ENCODE measurements at regions of chr12 and their contacts with region 1.

Region 1: DNA sequence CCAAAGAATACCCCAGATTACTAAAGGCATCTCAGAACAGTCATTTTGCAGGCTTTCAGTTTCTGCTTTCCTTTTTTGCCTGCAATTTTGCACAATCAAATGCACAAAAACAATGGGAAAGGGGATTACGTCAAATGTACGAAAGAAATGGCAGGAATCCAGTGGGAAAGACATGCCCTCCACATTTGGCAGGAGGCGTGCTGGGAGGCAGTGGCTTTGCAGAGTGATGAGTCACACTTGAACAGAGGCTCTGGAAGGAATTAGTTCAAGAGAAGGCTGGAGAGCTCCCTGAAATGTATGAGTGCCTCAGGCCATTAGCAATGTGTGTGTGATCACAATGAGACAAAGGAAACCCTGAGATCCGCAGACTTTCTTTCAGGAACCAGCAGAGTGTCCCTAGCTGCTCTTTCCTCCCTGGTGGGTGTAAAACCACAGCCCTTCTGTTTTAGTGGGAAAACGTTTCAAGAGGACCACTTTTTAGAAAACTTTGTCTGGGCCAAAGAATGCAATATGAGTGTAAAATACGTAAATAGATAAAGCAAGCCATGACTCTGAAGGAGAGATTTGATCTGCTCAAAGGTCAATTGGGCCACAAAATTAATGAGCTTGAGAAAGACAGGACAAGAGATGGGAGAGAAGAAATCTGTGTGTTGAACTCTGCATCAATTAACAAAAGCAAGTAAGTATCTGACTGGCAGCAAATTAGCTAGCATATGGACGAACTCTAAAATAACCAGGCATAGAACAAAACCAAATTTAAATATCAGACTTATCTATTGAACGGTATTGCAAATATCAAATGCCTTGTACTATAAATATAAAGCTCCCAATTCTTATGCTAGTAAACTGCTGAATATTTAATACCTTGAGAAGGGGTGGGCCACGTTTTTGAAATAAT is 155.4 kb upstream of the PDE3A start:
- DNase-seq: peak; percentile 98
- ATAC-seq: peak; percentile 99
- H3K4me3 ChIP-seq: no peak overlapping the region
- H3K27ac ChIP-seq: peak overlapping the region; percentile 65; the same call in 1 of the 2 replicates
- H3K4me1 ChIP-seq: peaks cover 1% of the 10 kb centered on the region
- H3K27me3 ChIP-seq: no peaks in the 10 kb centered on the region
- CTCF ChIP-seq: no peak
- POLR2A ChIP-seq: no peak
- RAD21 ChIP-seq: no peak

Region 2: DNA sequence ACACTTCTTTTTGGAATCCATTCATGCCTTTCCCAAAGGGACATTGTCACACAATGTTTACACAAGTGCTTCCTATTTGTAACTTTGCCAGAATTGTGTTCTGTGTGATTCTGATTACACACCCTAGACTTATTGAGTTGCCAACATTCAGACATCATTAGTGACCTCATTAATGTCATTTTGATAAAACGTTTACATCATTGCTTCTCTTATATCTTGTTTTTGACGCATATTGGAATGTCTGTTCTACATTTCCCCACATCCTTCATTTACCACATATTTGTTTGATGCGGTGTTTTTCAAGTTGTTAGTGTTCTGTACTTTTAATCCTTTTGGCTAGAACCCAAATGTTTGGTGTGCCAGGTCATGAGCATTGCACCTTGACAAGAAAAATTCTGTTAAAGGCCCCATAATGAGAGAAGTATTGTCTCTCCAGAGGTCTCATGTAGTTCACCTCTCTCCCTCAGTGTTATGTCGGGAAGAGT is 468.1 kb before region 1 on chr12:
- CTCF ChIA-PET with region 1: no interaction called
- POLR2A ChIA-PET with region 1: no interaction called
- dilution Hi-C with region 1: no loop called
- in situ Hi-C with region 1: loop called (anchors 10 kb)
- intact Hi-C with region 1: loop called (anchors 5 kb)
- DNase-seq: peak; percentile 84
- ATAC-seq: no peak; the same call in 1 of the 2 replicates
- H3K4me3 ChIP-seq: no peak overlapping the region
- H3K27ac ChIP-seq: no peak overlapping the region
- H3K4me1 ChIP-seq: no peaks in the 10 kb centered on the region; the same call in 1 of the 2 replicates
- H3K27me3 ChIP-seq: no peaks in the 10 kb centered on the region
- CTCF ChIP-seq: no peak
- POLR2A ChIP-seq: no peak
- RAD21 ChIP-seq: no peak

Region 3: GRCh38 chr12:19994970-19995369 is 217.9 kb before region 1 on chr12:
- CTCF ChIA-PET with region 1: no interaction called
- POLR2A ChIA-PET with region 1: no interaction called
- dilution Hi-C with region 1: no loop called
- in situ Hi-C with region 1: no loop called
- intact Hi-C with region 1: no loop called
- DNase-seq: no peak
- ATAC-seq: no peak
- H3K4me3 ChIP-seq: no peak overlapping the region
- H3K27ac ChIP-seq: no peak overlapping the region
- H3K4me1 ChIP-seq: peaks cover 5% of the 10 kb centered on the region
- H3K27me3 ChIP-seq: no peaks in the 10 kb centered on the region
- CTCF ChIP-seq: 0 out of 2 replicates have a peak, but pooled peaks have one; percentile 25
- POLR2A ChIP-seq: no peak
- RAD21 ChIP-seq: no peak

Region 4: DNA sequence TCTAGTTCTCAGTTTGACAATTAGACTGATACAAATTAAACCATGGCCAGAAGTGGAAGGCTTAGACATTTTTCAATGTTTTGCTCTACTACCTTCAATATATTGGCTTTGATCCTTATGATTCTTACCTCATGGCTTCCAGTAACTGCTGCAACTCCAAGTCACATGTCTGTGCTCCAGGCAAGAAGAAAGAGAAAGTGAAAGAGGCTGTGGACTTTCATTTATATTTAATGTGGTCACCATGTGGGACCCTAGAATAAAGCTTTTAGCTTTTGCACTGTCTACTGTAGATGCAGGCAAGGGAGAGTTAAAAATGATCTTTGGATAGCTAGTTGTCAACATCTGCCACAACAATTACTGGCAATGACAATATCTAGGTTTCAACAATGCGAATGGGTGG is 58.8 kb before region 1 on chr12:
- CTCF ChIA-PET with region 1: no interaction called
- POLR2A ChIA-PET with region 1: no interaction called
- dilution Hi-C with region 1: no loop called
- in situ Hi-C with region 1: no loop called
- intact Hi-C with region 1: loop called (anchors 5 kb)
- DNase-seq: peak; percentile 1
- ATAC-seq: no peak
- H3K4me3 ChIP-seq: peak overlapping the region; percentile 7; the same call in 1 of the 2 replicates
- H3K27ac ChIP-seq: no peak overlapping the region
- H3K4me1 ChIP-seq: no peaks in the 10 kb centered on the region
- H3K27me3 ChIP-seq: no peaks in the 10 kb centered on the region
- CTCF ChIP-seq: no peak
- POLR2A ChIP-seq: no peak
- RAD21 ChIP-seq: no peak

Region 5: GRCh38 chr12:20194171-20194570 is 18.7 kb before region 1 on chr12:
- CTCF ChIA-PET with region 1: interaction called, 3 read pairs
- POLR2A ChIA-PET with region 1: interaction called, 7 read pairs
- dilution Hi-C with region 1: no loop called
- in situ Hi-C with region 1: no loop called
- intact Hi-C with region 1: loop called (anchors 2 kb)
- DNase-seq: peak; percentile 17
- ATAC-seq: peak; percentile 68; the same call in 1 of the 2 replicates
- H3K4me3 ChIP-seq: no peak overlapping the region
- H3K27ac ChIP-seq: no peak overlapping the region
- H3K4me1 ChIP-seq: peaks cover under 1% of the 10 kb centered on the region; the same call in 1 of the 2 replicates
- H3K27me3 ChIP-seq: no peaks in the 10 kb centered on the region
- CTCF ChIP-seq: no peak
- POLR2A ChIP-seq: no peak
- RAD21 ChIP-seq: peak; percentile 20; the same call in 1 of the 2 replicates

Region 6: GRCh38 chr12:20268121-20268732 is 55.3 kb after region 1 on chr12:
- CTCF ChIA-PET with region 1: no interaction called
- POLR2A ChIA-PET with region 1: no interaction called
- dilution Hi-C with region 1: no loop called
- in situ Hi-C with region 1: no loop called
- intact Hi-C with region 1: no loop called
- DNase-seq: peak; percentile 27
- ATAC-seq: no peak
- H3K4me3 ChIP-seq: no peak overlapping the region
- H3K27ac ChIP-seq: no peak overlapping the region
- H3K4me1 ChIP-seq: peaks cover 6% of the 10 kb centered on the region
- H3K27me3 ChIP-seq: no peaks in the 10 kb centered on the region
- CTCF ChIP-seq: no peak
- POLR2A ChIP-seq: no peak
- RAD21 ChIP-seq: no peak